Ascending aorta (tissue), 2 donors: ENCODE measurements at regions of chr4 and their contacts with region 1.

Region 1: DNA sequence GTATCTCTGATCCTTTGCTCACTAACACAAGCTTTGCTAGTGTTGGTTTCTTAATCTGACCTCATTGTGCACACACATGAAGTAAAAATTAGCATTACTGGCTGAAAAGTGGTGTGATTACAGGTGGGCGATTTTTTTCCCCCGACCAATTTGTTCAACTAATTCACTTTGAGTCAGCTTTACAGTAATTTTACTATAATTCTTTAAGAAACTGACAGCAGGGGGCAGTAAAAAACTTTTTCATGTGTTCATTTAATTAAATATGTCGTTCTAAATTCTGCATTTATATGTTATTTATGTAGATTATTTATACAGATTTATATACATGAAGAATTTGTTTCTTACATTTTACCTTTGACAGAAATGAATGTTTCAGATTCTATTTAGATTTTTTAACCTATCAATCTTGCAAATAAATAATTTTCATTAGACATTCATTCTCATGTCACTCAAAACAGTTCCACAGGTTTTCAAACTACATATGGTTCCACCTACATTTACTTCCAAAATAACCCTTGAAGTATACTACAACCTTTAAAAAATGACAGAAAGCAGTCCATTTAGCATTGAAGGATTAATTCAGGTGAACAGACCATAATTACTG is 17.5 kb downstream of the PALLD start:
- DNase-seq: no peak
- H3K4me3 ChIP-seq: no peak overlapping the region
- H3K27ac ChIP-seq: no peak overlapping the region
- H3K4me1 ChIP-seq: no peaks in the 10 kb centered on the region
- H3K27me3 ChIP-seq: no peaks in the 10 kb centered on the region
- CTCF ChIP-seq: peak; percentile 3 to 58 (median 44)

Region 2: DNA sequence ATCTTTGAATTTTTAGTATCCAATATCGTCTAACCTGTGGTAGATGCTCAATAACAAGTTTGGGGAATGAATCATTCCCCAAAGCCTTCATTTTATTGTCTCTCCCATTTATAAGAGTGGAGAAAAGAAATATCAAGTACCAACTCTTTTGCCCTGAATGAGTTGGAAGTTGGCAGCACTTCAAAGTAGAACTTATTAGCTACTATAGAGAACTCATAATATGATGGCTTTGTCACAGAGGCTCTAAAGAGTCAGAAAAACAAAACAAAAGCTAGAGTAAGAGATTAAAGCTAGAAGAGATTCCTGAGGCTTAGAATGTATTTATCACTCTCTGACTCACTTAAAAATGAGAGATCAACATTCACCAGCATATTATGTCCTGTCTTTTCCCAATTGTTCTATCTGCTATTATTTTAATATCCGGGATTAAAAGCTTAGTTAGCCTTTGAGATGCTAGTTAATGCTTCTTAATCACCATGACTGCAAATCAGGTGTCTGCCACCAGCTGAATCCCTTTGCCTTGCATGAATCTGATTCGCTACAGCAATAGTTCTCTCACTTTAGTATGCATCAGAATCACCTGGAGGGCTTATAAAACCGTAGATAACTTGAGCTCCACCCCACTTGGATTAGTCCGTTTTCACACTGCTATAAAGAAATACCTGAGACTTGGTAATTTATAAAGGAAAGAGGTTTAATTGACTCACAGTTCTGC is 60.4 kb after region 1 on chr4:
- intact Hi-C with region 1: no loop called
- DNase-seq: no peak
- H3K4me3 ChIP-seq: no peak overlapping the region
- H3K27ac ChIP-seq: no peak overlapping the region
- H3K4me1 ChIP-seq: peaks cover 0 to 2% of the 10 kb centered on the region in 2 donors
- H3K27me3 ChIP-seq: no peaks in the 10 kb centered on the region
- CTCF ChIP-seq: no peak

Region 3: DNA sequence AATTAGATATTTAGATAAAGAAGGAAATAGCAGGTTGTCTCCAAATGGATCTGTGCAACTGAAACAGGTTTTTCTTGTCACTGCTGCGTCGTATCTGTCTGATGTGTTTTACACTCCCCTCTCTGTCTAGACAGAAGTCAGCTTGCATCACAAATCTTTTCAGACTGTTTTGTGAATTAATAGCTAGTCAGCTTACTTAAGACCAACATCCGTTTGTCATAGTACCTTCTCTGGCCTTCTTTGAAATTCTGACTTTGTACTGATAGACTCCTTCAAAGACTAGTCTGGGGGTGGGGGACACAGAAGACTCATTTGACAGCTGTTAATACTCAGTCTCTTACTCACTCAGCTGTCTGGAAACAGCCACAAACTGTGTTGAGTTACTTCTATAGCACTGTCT is 180.3 kb after region 1 on chr4:
- intact Hi-C with region 1: loop called (anchors 10 kb)
- DNase-seq: no peak
- H3K4me3 ChIP-seq: no peak overlapping the region
- H3K27ac ChIP-seq: no peak overlapping the region
- H3K4me1 ChIP-seq: peaks cover 0 to 3% of the 10 kb centered on the region in 2 donors
- H3K27me3 ChIP-seq: no peaks in the 10 kb centered on the region
- CTCF ChIP-seq: no peak

Region 4: GRCh38 chr4:168825975-168826374 is 311.6 kb after region 1 on chr4:
- intact Hi-C with region 1: loop called (anchors 5 kb)
- DNase-seq: no peak
- H3K4me3 ChIP-seq: no peak overlapping the region
- H3K27ac ChIP-seq: no peak overlapping the region
- H3K4me1 ChIP-seq: no peaks in the 10 kb centered on the region
- H3K27me3 ChIP-seq: no peaks in the 10 kb centered on the region
- CTCF ChIP-seq: no peak

Region 5: GRCh38 chr4:169485791-169486742 is 971.7 kb after region 1 on chr4:
- intact Hi-C with region 1: loop called (anchors 10 kb)
- DNase-seq: no peak
- H3K4me3 ChIP-seq: no peak overlapping the region
- H3K27ac ChIP-seq: no peak overlapping the region
- H3K4me1 ChIP-seq: no peaks in the 10 kb centered on the region
- H3K27me3 ChIP-seq: no peaks in the 10 kb centered on the region
- CTCF ChIP-seq: peak; percentile 33 to 60 (median 49)